Activated naive CD4-positive, alpha-beta T cell treated with anti-CD3 and anti-CD28 coated beads for 36 hours (primary cell): ENCODE measurements at regions of chr16 and their contacts with region 1.

Region 1: DNA sequence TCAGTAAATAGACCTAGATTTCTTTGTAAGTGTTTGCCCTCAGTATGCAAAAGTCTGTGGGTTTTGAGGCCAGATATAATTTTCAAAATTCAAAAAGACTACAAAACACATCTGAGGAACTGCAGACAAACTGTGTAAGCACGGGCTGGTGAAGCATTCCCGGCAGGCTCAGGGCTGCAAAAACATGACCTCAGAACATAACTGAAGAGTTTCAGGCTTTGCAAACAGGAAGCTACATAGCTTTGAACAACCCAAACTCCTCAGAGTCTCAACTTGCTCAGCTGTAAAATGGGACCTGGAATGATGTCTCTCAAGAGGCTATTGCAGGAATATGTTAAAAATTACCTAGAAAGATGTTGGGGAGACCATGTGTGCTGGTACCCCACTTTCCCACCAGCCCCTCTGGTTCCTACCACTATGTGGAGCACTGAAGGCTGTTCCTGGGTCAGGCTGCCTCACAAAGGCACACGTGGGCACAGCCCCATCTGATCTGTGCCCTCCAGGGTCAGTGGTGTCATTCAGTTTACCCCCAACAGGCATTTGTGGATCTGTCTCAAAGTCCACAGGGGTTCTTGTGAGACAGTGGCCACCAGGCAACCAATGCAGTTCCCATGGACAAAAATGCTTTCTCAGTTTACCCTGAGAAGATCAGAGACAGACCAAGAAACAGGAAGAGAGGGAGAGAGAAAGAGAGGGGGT is 72.9 kb downstream of the CREBBP start:
- DNase-seq: peak; percentile 67
- H3K4me3 Mint-ChIP-seq: no peak overlapping the region
- H3K27ac Mint-ChIP-seq: peak overlapping the region; percentile 56
- H3K4me1 Mint-ChIP-seq: peaks cover 67% of the 10 kb centered on the region
- H3K27me3 Mint-ChIP-seq: no peaks in the 10 kb centered on the region

Region 2: DNA sequence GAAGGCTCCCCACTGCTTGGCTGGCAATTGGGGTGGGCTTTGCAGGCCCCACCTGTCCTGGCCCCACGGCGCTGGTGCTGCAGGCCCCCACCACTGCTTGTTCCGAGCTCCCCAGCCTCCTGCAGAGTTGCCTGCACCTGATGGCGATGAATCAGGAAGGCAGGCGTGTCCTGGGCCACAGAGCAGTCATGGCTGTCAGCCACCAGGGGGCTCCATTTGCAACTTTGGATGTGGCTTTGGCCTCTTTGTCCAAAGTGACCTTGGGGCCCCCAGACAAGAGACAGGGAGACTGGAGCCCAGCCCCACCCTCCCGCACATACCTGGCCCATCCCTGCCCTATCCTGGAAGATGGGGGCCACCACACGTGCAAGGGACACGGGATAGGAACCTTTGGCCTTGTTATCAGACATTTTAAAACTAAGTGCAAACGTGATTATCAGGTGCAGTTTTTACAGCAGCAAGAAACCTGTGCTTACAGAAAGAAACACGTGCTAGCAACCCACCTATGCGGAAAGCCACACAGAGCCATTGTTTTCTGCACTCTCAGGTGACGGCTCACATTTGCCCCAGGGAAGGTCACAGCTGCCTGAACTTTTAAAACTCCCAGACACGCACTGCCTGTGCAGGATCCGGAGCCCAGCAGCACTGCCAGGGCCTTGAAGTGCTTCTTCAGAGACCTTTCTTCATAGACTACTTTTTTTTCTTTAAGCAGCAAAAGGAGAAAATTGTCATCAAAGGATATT is 153.2 kb before region 1 on chr16 and contains the start of gene DNASE1:
- CTCF ChIA-PET with region 1: no interaction called
- intact Hi-C with region 1: no loop called
- DNase-seq: peak; percentile 74
- H3K4me3 Mint-ChIP-seq: no peak within 1 kb of the TSS
- H3K27ac Mint-ChIP-seq: no peak within 1 kb of the TSS
- H3K4me1 Mint-ChIP-seq: peaks cover 4% of the 10 kb centered on the region
- H3K27me3 Mint-ChIP-seq: no peaks in the 10 kb centered on the region
- total RNA-seq, gene DNASE1: 13.5 to 13.8 TPM

Region 3: GRCh38 chr16:3787924-3788661 is 19.5 kb before region 1 on chr16:
- CTCF ChIA-PET with region 1: no interaction called
- intact Hi-C with region 1: loop called (anchors 1 kb)
- DNase-seq: no peak
- H3K4me3 Mint-ChIP-seq: no peak overlapping the region
- H3K27ac Mint-ChIP-seq: no peak overlapping the region
- H3K4me1 Mint-ChIP-seq: peaks cover 47% of the 10 kb centered on the region
- H3K27me3 Mint-ChIP-seq: peaks cover 2% of the 10 kb centered on the region

Region 4: DNA sequence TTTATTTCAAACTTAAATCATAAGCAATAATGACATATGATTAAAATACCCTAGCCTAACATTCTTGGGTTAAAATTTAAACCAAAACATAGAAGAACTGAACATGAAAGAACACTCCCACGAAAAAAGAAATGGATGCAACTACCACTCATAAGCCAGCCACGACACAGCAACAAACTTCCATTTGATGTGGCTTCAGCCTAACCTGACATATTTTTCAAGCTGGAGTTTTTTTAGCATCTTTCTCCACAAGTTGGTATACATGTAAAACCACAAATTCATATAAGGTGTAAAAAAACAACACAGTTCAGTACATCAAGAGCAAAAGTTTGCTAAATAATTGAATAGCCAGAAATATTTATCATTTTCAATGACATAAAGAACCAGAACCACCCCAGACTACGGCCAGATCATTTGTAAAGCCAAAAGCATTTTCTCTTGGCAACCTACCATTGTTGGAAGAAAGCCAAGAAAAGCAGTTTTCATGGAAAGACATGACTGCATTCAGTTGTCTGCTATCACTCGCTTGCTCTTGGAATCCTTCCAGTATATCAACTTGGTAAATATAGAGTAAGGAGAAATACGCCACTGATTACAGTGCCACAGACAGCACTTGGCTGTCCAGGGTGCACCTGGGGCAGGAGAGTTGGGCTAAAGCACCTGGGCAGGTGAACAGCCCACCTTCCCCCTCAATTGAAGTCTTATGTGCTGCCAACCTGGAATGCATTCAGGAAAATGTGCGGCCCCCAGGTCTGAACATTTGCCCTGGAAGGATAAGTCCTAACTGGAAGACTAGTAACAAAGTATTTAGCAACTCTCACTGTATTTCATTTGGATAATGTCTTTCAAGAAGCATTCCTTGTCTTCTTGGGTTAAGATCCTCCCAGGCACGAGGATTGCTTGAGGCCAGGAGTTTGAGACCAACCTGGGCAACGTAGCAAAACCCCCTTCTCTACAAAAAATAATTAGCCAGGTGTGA is 12.5 kb after region 1 on chr16:
- CTCF ChIA-PET with region 1: no interaction called
- intact Hi-C with region 1: loop called (anchors 1 kb)
- DNase-seq: no peak
- H3K4me3 Mint-ChIP-seq: no peak overlapping the region
- H3K27ac Mint-ChIP-seq: no peak overlapping the region
- H3K4me1 Mint-ChIP-seq: peaks cover 90% of the 10 kb centered on the region
- H3K27me3 Mint-ChIP-seq: no peaks in the 10 kb centered on the region